Breast epithelium (tissue), 4 donors: ENCODE measurements at regions of chr2 and their contacts with region 1.

Region 1: DNA sequence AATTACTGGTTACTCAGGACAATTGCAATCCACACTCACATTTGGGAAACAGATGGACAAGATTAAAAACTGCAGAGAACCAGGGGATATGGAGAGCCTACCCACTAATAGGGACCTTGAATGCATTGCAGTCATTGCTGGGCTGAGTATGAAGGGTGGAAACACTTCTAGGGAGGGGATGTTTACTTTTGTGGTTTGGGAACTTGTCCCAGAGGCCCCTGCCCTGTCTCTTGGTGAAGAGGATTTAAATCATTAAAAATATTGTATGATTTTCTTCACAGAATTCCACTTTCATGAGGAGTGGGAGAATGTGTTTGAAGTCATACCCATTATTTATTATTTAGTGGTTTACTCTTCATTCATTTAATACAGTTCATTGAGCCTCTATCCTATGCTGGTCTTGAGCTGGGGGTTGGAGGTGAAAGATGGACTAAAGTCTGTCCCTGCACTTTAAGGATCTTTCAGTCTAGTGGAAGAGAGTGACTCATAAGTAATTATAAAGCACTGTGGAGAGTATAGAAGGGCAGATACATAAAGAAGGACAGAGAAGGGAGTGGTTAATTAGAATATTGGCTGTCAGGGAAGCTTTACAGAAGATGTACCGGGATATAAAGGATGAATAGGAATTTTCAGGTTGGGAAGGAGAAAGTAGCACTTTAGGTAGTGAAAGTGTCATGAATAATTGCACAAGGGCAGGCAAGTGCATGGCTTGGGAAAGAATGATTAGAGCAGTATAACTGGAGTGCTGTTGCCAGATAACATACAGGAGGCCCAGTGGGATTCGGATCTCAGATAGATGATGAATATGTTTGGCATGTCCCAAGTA is 313.4 kb downstream of the LPIN1 start:
- DNase-seq: no peak
- H3K4me3 ChIP-seq: no peak overlapping the region
- H3K27ac ChIP-seq: no peak overlapping the region
- H3K4me1 ChIP-seq: no peaks in the 10 kb centered on the region
- H3K27me3 ChIP-seq: no peaks in the 10 kb centered on the region
- CTCF ChIP-seq: no peak
- POLR2A ChIP-seq: no peak

Region 2: DNA sequence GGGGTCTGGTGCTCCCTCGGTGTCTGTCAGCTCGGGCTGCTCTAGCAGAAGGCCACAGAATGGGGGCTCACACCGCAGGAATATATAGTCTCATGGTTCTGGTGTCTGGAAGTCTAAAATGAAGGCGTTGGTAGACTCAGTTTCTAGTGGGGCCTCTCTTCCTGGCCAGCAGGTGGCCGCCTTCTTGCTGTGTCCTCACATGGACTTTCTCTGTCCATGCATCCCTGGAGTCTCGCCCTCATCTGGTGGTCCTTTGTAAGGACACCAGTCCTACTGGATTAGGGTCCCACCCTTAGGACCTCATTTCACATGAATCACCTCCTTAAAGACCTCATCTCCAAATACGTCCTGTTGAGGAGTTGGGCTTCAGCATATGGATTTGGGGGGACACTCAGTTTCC is 1871.6 kb before region 1 on chr2:
- intact Hi-C with region 1: loop called (anchors 10 kb)
- DNase-seq: no peak
- H3K4me3 ChIP-seq: no peak overlapping the region
- H3K27ac ChIP-seq: no peak overlapping the region
- H3K4me1 ChIP-seq: no peaks in the 10 kb centered on the region
- H3K27me3 ChIP-seq: peaks cover 0 to 13% of the 10 kb centered on the region in 2 donors
- CTCF ChIP-seq: no peak
- POLR2A ChIP-seq: no peak

Region 3: GRCh38 chr2:11998218-11998617 is 61.6 kb before region 1 on chr2:
- intact Hi-C with region 1: no loop called
- DNase-seq: no peak
- H3K4me3 ChIP-seq: no peak overlapping the region
- H3K27ac ChIP-seq: no peak overlapping the region
- H3K4me1 ChIP-seq: no peaks in the 10 kb centered on the region
- H3K27me3 ChIP-seq: no peaks in the 10 kb centered on the region
- CTCF ChIP-seq: no peak
- POLR2A ChIP-seq: no peak